ENCODE measurements at regions of chr15 and their contacts with region 1.

Region 1: GRCh38 chr15:78437762-78438302 is at the start of gene IREB2:
- DNase-seq: peak; percentile 97 to 99
- H3K4me3 ChIP-seq: peak within 1 kb of the TSS; percentile 67 to 96
- H3K27ac ChIP-seq: peak within 1 kb of the TSS; percentile 90 to 97
- H3K4me1 ChIP-seq: peaks cover 0 to 13% of the 10 kb centered on the region in 2 donors
- H3K27me3 ChIP-seq: no peaks in the 10 kb centered on the region
- CTCF ChIP-seq: no peak
- total RNA-seq, gene IREB2: 12.7 TPM

Region 2: DNA sequence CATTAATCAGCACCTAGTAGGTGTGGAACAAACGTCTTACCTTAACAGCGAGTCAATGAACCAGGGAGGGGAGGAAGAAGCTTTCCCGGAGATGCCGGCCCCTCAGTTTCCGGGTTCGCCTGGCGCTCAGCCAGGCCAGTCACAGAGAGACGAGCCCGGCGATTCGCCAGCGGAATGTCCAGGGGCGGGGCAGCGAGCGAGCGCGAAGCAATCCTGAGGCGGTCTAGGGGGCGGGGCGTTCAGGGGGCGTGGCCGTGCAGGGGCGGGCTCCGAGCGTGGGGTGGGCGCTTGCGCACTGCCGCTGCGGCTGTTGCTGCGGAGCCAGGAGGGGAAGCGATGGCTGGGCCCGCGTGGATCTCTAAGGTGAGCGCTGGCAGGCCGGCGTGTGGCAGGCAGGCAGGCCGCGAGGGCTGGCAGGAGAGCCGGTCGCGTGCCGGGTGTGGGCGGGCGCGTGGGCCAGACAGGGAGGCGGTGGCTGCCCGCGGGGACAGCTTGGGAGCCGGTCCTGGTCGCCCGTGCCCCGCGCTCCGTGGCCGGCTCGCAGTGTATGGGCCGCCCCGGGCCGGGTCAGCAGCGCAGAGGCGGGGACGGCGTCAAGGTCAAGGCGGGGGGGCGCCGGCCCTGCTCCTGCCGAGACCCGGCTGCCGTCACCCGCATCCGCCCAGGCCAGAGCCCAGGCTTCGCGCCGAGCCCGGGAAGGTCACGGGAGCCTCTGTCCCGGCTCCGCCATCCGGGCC is 288.6 kb before region 1 on chr15 and contains the start of gene IDH3A:
- intact Hi-C with region 1: loop called (anchors 2 kb)
- DNase-seq: peak; percentile 91 to 99
- H3K4me3 ChIP-seq: peak within 1 kb of the TSS; percentile 79 to 90
- H3K27ac ChIP-seq: peak within 1 kb of the TSS; percentile 81 to 87
- H3K4me1 ChIP-seq: peaks cover 5 to 14% of the 10 kb centered on the region in 2 donors
- H3K27me3 ChIP-seq: no peaks in the 10 kb centered on the region
- CTCF ChIP-seq: no peak
- total RNA-seq, gene IDH3A: 17.7 TPM

Region 3: DNA sequence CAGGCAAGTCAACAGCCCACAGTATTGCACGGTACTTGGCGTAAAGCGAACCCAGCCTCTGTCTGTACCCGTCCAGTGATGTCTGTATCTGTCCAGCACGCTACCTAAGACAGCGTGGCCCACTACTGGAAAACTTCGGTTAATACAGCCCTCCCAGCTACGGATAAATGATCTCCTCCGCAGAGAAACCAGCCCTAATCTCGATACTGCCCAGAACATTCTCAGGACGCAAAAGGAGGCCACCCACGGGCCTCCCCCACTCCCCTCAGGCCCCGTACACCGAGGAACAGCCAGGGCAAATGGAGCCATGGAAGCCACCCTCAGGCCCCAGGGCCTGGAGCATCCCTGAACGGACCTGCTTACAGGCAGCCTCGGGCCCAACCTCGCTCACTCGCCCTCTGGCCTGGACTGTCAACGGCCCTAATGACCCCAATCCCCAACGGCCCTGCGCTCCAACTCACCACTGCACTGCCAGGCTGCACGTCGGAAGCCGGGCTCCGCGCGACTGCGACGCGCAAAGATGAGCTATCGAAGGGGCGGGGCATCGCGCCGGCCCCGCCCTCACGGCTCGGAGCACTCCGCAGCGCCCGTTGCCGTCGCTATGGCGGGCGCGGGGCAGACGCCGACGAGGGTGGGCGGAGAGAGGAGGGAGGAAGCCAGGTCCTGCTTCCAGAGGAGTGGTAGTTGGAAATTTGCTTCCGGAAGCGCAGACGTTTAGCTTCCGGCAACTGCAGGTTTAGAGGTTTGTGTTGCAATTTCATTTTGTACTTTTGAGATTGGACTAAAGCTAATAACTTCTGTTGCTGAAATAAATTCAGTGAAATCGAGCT is 138.5 kb before region 1 on chr15 and contains the start of gene SKIC8:
- intact Hi-C with region 1: loop called (anchors 1 kb)
- DNase-seq: peak; percentile 68 to 95
- H3K4me3 ChIP-seq: peak within 1 kb of the TSS; percentile 76 to 83
- H3K27ac ChIP-seq: peak within 1 kb of the TSS; percentile 72 to 74
- H3K4me1 ChIP-seq: peaks cover 0 to 3% of the 10 kb centered on the region in 2 donors
- H3K27me3 ChIP-seq: no peaks in the 10 kb centered on the region
- CTCF ChIP-seq: no peak
- total RNA-seq, gene SKIC8: 19.9 TPM

Region 4: DNA sequence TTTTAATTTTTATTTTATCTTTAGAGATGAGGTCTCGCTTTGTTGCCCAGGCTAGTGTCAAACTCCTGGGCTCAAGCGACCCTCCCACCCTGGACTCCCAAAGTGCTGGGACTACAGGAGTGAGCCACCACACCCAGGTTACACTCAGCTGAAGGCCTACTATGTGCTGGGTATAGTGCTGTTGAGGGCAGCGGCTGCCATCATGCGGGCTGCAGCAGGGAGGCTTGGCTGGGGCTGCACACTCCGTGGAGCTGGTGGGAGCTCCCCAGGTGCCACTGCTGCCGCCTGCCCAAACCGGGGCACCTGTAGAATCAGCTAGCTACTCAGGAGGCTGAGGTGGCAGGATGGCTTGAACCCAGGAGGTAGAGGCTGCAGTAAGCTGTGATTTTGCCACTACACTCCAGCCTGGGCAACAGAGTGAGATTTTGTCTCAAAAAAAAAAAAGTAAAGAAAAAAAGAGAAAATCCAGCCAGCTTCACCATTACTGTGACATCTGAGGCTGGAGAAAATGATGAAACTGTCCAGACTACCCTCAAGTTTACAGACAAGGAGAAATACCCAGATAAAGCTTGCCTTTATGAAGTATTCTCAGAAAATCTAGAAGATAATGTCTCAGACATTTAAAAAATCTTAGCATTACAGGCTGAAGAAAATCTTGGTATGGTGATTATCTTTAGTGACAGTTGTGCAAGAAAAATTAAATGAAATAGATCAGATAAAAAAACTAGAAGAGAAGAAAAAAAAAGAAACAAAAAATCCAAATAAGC is 55.5 kb before region 1 on chr15:
- intact Hi-C with region 1: no loop called
- DNase-seq: no peak
- H3K4me3 ChIP-seq: no peak overlapping the region
- H3K27ac ChIP-seq: no peak overlapping the region
- H3K4me1 ChIP-seq: no peaks in the 10 kb centered on the region
- H3K27me3 ChIP-seq: no peaks in the 10 kb centered on the region
- CTCF ChIP-seq: no peak

Region 5: DNA sequence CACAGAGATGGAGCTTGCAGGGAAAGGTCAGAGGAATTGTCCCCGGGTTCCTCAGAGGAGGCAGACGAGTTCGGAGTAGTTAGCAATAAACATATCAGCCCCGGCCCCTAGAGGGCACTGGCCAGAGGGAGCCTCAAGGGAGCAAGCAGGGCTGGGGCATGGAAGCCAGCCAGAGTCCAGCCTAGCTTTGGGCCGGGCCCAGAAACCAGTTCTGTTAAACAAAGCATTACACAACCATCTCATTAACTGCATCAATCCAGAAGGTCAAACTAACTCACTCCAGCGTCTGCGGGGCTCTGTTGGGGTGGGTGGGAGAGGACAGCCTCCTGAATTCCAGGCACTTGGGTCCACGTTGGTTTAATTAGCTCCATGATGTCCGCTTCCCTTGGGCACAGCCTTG is 40.9 kb before region 1 on chr15:
- intact Hi-C with region 1: no loop called
- DNase-seq: peak in 1 of 2 donors; percentile 64
- H3K4me3 ChIP-seq: no peak overlapping the region
- H3K27ac ChIP-seq: no peak overlapping the region
- H3K4me1 ChIP-seq: no peaks in the 10 kb centered on the region
- H3K27me3 ChIP-seq: no peaks in the 10 kb centered on the region
- CTCF ChIP-seq: no peak

Region 6: GRCh38 chr15:78492872-78493271 is 55.0 kb after region 1 on chr15:
- intact Hi-C with region 1: no loop called
- DNase-seq: no peak
- H3K4me3 ChIP-seq: no peak overlapping the region
- H3K27ac ChIP-seq: no peak overlapping the region
- H3K4me1 ChIP-seq: no peaks in the 10 kb centered on the region
- H3K27me3 ChIP-seq: no peaks in the 10 kb centered on the region
- CTCF ChIP-seq: no peak

Region 7: GRCh38 chr15:78540141-78540928 is 102.5 kb after region 1 on chr15 and contains the start of gene PSMA4:
- intact Hi-C with region 1: loop called (anchors 1 kb)
- DNase-seq: peak; percentile 77 to 95
- H3K4me3 ChIP-seq: peak within 1 kb of the TSS; percentile 76 to 94
- H3K27ac ChIP-seq: peak within 1 kb of the TSS; percentile 95 to 97
- H3K4me1 ChIP-seq: peaks cover 0 to 11% of the 10 kb centered on the region in 2 donors
- H3K27me3 ChIP-seq: no peaks in the 10 kb centered on the region
- CTCF ChIP-seq: peak in 2 of 3 experiments; percentile 26 to 53
- total RNA-seq, gene PSMA4: 94.7 TPM